Ascending aorta (tissue), 2 donors: ENCODE measurements at regions of chr21 and their contacts with region 1.

Region 1: DNA sequence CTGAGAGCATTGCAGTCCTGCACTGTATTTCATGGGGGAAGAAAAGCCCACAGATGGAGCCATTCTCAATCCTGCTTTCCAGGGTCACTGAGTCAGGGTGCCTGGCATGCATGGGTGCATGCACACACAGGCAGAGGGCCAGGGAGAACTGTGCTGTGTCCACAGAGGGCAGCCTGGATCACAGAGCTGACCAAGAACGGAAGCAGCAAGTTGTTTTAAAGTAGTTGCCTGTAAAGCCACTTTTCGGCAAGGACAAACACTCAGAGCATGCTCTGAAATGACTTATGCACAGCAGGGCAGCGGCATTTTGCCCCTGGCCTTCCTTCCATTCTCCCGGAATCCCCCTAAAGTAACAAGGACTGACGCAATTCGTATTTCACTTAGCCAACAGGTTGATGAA is 3.6 kb downstream of the ERG start:
- DNase-seq: peak in 1 of 2 donors; percentile 85
- H3K4me3 ChIP-seq: peak overlapping the region in 1 of 2 donors; percentile 28
- H3K27ac ChIP-seq: peak overlapping the region; percentile 77 to 84
- H3K4me1 ChIP-seq: peaks cover 25 to 82% of the 10 kb centered on the region in 2 donors
- H3K27me3 ChIP-seq: no peaks in the 10 kb centered on the region
- CTCF ChIP-seq: no peak

Region 2: DNA sequence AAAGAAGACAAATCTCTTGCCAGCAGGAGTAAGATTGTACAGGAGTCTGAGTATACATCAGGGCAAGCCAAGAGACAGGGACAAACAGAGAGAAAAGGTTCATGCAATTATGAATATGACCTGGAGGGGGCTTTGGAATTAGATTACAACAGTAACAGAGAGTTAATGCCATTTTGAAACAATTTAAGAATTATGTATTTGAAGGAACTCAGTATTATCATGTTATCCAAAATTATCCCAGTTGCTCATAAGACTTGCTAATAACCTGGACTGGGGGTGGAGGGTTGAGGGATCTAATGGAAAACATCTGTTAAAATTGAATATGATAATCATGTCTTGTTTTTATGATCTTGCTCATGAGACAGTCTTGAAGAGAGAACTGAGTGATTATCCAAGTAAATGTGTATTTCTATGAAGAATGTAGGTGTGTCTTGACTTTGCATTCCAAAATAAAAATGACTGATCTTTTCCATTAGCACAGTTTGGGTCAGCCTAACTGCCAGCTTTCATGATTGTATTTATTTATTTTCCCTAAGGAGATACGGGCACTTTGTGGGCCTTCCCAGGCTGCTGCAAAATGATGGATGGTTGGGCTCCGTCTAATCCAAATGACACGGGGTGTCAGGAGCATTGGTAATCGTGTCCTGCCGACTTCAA is 114.1 kb before region 1 on chr21:
- intact Hi-C with region 1: loop called (anchors 5 kb)
- DNase-seq: peak in 1 of 2 donors; percentile 78
- H3K4me3 ChIP-seq: peak overlapping the region in 1 of 2 donors; percentile 17
- H3K27ac ChIP-seq: peak overlapping the region; percentile 75 to 89
- H3K4me1 ChIP-seq: peaks cover 17 to 41% of the 10 kb centered on the region in 2 donors
- H3K27me3 ChIP-seq: no peaks in the 10 kb centered on the region
- CTCF ChIP-seq: peak; percentile 7 to 33 (median 28)